ENCODE measurements at regions of chr1 and their contacts with region 1.

Region 1: GRCh38 chr1:43934101-43934985 is 742 bp downstream of the ARTN start:
- DNase-seq: peak; percentile 96
- H3K4me3 ChIP-seq: no peak overlapping the region; a peak in 1 of 4 replicates
- H3K27ac ChIP-seq: no peak overlapping the region
- H3K4me1 ChIP-seq: peaks cover 0 to 10% of the 10 kb centered on the region in 2 experiments; a peak in 2 of 4 replicates
- H3K27me3 ChIP-seq: no peaks in the 10 kb centered on the region
- CTCF ChIP-seq: peak; percentile 93
- EP300 ChIP-seq: no peak
- RAD21 ChIP-seq: peak; percentile 92

Region 2: DNA sequence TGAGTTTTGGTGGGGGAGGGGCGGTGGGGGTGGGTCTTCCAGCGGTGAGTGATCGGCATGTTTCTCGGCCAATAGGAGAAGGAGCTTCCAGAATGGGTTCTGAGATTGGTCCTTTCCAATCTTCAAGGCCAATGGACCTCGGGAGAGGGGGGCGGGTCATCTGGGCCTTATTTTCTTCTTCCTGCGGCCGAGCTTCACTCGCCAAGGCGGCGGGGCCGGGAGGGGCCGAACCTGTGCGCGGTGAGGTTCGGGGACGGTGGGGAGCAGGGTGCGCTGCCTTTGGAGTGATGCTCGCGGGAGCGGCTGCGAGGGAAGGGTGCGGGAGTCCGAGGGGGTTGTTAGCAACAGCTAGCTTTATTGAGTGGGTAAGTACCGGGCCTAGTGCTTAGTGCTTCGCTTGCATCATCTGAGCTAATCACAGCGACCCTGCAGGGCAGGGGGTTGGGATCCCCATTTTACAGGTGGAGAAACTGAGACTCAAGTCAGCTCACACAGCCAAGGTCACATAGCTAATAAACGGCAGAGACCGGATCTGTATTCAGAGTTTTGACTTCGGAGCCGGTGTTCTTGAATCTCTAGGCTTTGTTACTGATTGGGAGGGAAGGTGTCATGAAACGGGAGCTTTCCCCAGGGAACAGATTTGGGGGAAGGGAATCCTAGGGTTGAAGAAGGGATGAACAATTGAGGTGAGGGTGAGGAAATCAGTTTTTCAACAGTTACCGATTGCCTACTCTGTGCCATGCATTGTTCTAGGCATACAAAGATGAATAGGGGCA is 283.8 kb before region 1 on chr1:
- CTCF ChIA-PET with region 1: interaction called, 13 read pairs
- POLR2A ChIA-PET with region 1: interaction called, 3 read pairs
- DNase-seq: peak; percentile 99
- H3K4me3 ChIP-seq: peak overlapping the region; percentile 85 to 92
- H3K27ac ChIP-seq: peak overlapping the region; percentile 89 to 98
- H3K4me1 ChIP-seq: peaks cover 0 to 10% of the 10 kb centered on the region in 2 experiments; a peak in 2 of 4 replicates
- H3K27me3 ChIP-seq: no peaks in the 10 kb centered on the region
- CTCF ChIP-seq: no peak
- EP300 ChIP-seq: no peak
- RAD21 ChIP-seq: no peak

Region 3: DNA sequence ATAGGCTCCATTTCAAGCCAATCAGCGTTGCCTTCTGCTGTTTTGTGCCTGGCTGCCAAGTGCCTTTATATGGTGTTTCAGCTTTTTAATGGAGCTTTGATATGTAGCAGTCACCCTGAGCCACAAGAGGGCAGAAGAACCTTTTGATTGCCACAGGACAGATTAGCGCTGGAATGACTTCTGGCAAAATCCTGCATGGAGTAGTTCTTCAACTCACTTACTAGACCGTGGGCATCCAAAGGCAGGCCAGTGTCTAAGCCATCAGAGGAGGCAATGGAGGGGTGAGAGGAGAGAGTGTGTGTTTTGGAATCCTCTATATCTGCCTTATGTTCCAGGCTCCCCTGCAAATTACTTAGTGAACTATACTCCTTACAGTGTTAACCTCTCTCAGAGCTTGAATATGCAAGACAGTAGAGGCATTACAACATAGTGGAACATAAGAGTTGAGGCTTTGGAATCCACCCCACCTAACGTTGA is 170.8 kb before region 1 on chr1:
- CTCF ChIA-PET with region 1: interaction called, 533 read pairs
- POLR2A ChIA-PET with region 1: interaction called, 26 read pairs
- DNase-seq: peak; percentile 78
- H3K4me3 ChIP-seq: no peak overlapping the region
- H3K27ac ChIP-seq: no peak overlapping the region
- H3K4me1 ChIP-seq: peaks cover 5 to 11% of the 10 kb centered on the region in 2 experiments
- H3K27me3 ChIP-seq: no peaks in the 10 kb centered on the region
- CTCF ChIP-seq: peak; percentile 94
- EP300 ChIP-seq: no peak
- RAD21 ChIP-seq: peak; percentile 99

Region 4: GRCh38 chr1:43858328-43858731 is 76.0 kb before region 1 on chr1:
- CTCF ChIA-PET with region 1: interaction called, 13 read pairs
- POLR2A ChIA-PET with region 1: no interaction called
- DNase-seq: peak; percentile 30
- H3K4me3 ChIP-seq: no peak overlapping the region
- H3K27ac ChIP-seq: peak overlapping the region; percentile 58 to 70
- H3K4me1 ChIP-seq: peaks cover 35 to 36% of the 10 kb centered on the region in 2 experiments
- H3K27me3 ChIP-seq: no peaks in the 10 kb centered on the region
- CTCF ChIP-seq: no peak
- EP300 ChIP-seq: peak in 1 of 2 experiments; percentile 94; a peak in 3 of 4 replicates
- RAD21 ChIP-seq: no peak

Region 5: DNA sequence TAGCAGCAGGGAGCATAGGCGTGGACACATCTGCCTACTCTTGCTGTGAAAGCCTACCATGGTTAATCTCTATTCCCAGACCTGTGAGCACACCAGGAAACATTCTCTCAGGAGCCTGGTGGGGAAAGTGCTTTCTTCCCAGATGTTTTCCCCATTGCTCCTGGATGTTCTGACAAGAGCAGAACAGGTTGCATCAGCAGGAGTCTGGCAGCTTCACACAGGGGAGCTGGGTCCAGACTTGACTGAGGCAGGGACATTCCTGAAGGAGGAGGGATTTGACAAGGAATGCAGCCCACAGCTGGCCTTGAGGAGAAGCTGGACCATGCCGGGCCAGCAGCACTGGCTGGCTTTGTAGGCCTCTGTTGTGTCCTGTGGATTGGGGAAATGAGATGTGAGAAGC is 21.7 kb before region 1 on chr1:
- CTCF ChIA-PET with region 1: interaction called, 175 read pairs
- POLR2A ChIA-PET with region 1: interaction called, 6 read pairs
- DNase-seq: no peak
- H3K4me3 ChIP-seq: no peak overlapping the region
- H3K27ac ChIP-seq: peak overlapping the region in 1 of 2 experiments; percentile 82; a peak in 2 of 4 replicates
- H3K4me1 ChIP-seq: peaks cover 14 to 43% of the 10 kb centered on the region in 2 experiments; a peak in 3 of 4 replicates
- H3K27me3 ChIP-seq: no peaks in the 10 kb centered on the region
- CTCF ChIP-seq: no peak
- EP300 ChIP-seq: no peak
- RAD21 ChIP-seq: no peak

Region 6: GRCh38 chr1:44036409-44037139 is 102.2 kb after region 1 on chr1:
- CTCF ChIA-PET with region 1: interaction called, 24 read pairs
- POLR2A ChIA-PET with region 1: no interaction called
- DNase-seq: peak; percentile 79
- H3K4me3 ChIP-seq: no peak overlapping the region; a peak in 1 of 4 replicates
- H3K27ac ChIP-seq: peak overlapping the region in 1 of 2 experiments; percentile 74; a peak in 2 of 4 replicates
- H3K4me1 ChIP-seq: peaks cover 14 to 35% of the 10 kb centered on the region in 2 experiments; a peak in 3 of 4 replicates
- H3K27me3 ChIP-seq: no peaks in the 10 kb centered on the region
- CTCF ChIP-seq: peak; percentile 85
- EP300 ChIP-seq: no peak
- RAD21 ChIP-seq: peak; percentile 89

Region 7: DNA sequence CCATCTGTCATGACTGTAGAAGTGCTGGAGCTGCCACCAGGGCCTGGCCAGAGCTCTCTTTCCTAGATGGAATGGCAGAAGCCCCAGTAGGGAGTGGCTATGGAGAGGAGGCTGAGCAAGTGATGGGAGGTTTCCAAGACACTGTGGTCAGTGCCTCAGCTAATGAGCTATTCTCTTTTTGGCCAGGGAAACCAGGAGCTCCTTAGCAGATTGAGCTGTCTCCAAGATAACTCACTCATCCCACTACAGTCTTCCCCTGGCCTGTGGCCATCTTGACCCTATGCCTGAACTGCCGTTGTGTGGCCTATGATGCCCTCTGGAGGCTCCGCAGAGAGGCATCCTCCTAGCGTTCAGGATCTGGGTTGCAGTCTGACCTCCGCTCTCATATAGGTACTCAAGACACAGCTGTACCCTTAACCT is 360.3 kb after region 1 on chr1:
- CTCF ChIA-PET with region 1: no interaction called
- POLR2A ChIA-PET with region 1: no interaction called
- DNase-seq: peak; percentile 41
- H3K4me3 ChIP-seq: no peak overlapping the region
- H3K27ac ChIP-seq: peak overlapping the region in 1 of 2 experiments; percentile 69; a peak in 2 of 4 replicates
- H3K4me1 ChIP-seq: peaks cover 0 to 26% of the 10 kb centered on the region in 2 experiments; a peak in 1 of 4 replicates
- H3K27me3 ChIP-seq: no peaks in the 10 kb centered on the region
- CTCF ChIP-seq: peak; percentile 25; the same call in 1 of the 2 replicates
- EP300 ChIP-seq: no peak
- RAD21 ChIP-seq: peak; percentile 49